ENCODE measurements at regions of chr1 and their contacts with region 1.

Region 1: GRCh38 chr1:181479137-181479745 is 4.1 kb upstream of the CACNA1E start:
- DNase-seq: peak; percentile 59
- ATAC-seq: peak; percentile 95
- H3K4me3 ChIP-seq: no peak overlapping the region
- H3K27ac ChIP-seq: no peak overlapping the region
- H3K4me1 ChIP-seq: no peaks in the 10 kb centered on the region
- H3K27me3 ChIP-seq: peaks cover 40% of the 10 kb centered on the region
- CTCF ChIP-seq: peak; percentile 81 to 89 (median 84)
- POLR2A ChIP-seq: no peak
- RAD21 ChIP-seq: peak; percentile 87

Region 2: DNA sequence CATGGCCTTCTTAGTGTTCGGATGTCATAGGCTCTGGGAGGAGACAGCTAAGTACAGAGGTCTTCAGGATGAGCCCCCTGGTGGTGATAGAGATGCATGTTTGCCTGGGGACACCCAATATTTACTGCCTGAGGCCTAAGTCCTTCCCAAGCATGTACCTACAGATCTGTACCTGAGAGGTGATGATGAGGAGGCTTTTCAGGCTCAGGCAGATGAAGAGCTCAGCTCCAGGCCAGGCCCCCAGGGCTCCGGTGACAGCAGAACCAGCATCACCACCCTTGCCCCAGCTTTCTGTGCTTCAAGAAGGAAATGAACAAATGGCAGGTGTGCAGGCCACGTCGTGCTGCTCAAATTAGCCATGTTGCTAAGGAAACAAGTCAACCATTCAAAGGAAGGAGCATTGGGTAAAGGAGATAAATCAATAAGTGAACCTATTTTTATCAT is 25.2 kb after region 1 on chr1:
- CTCF ChIA-PET with region 1: interaction called, 4 read pairs
- POLR2A ChIA-PET with region 1: no interaction called
- RAD21 ChIA-PET with region 1: no interaction called
- intact Hi-C with region 1: loop called (anchors 1 kb)
- DNase-seq: peak; percentile 62
- ATAC-seq: peak; percentile 98
- H3K4me3 ChIP-seq: no peak overlapping the region
- H3K27ac ChIP-seq: no peak overlapping the region
- H3K4me1 ChIP-seq: no peaks in the 10 kb centered on the region
- H3K27me3 ChIP-seq: peaks cover 10% of the 10 kb centered on the region
- CTCF ChIP-seq: peak in 2 of 3 experiments; percentile 64 to 66; a peak in 4 of 6 replicates
- POLR2A ChIP-seq: no peak
- RAD21 ChIP-seq: no peak; the same call in 1 of the 2 replicates

Region 3: GRCh38 chr1:181676269-181676668 is 197.0 kb after region 1 on chr1:
- CTCF ChIA-PET with region 1: interaction called, 9 read pairs
- POLR2A ChIA-PET with region 1: no interaction called
- RAD21 ChIA-PET with region 1: interaction called in 1 of 2 experiments, 3 read pairs
- intact Hi-C with region 1: loop called (anchors 1 kb)
- DNase-seq: peak; percentile 13
- ATAC-seq: peak; percentile 87
- H3K4me3 ChIP-seq: no peak overlapping the region
- H3K27ac ChIP-seq: no peak overlapping the region
- H3K4me1 ChIP-seq: no peaks in the 10 kb centered on the region
- H3K27me3 ChIP-seq: peaks cover 29% of the 10 kb centered on the region; the same call in 1 of the 2 replicates
- CTCF ChIP-seq: peak; percentile 20 to 54 (median 45); a peak in 4 of 6 replicates
- POLR2A ChIP-seq: no peak
- RAD21 ChIP-seq: peak; percentile 60

Region 4: DNA sequence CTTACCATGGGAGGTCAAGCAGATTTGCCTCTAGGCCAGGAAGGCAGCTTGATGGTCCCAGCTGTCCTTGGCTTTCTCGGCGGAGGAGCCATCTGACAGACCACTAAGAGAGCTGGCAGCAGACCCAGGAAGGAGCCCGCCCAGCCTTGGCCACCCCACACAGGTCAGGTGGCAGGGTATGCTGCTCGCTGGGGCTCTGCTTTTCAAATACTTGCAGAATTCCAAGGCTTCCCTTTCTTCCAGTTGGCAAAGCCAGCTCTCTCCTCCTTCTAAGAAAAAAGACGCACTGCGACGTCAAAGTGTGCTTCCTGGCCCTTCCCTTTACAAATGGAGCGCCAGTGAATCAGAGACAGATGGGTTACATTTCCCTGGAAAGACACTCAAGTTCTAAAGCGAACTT is 233.5 kb after region 1 on chr1:
- CTCF ChIA-PET with region 1: no interaction called
- POLR2A ChIA-PET with region 1: no interaction called
- RAD21 ChIA-PET with region 1: no interaction called
- intact Hi-C with region 1: no loop called
- DNase-seq: no peak
- ATAC-seq: no peak
- H3K4me3 ChIP-seq: no peak overlapping the region
- H3K27ac ChIP-seq: no peak overlapping the region
- H3K4me1 ChIP-seq: no peaks in the 10 kb centered on the region
- H3K27me3 ChIP-seq: peaks cover 57% of the 10 kb centered on the region
- CTCF ChIP-seq: no peak
- POLR2A ChIP-seq: no peak
- RAD21 ChIP-seq: no peak

Region 5: GRCh38 chr1:182054698-182055326 is 575.6 kb after region 1 on chr1:
- CTCF ChIA-PET with region 1: interaction called, 18 read pairs
- POLR2A ChIA-PET with region 1: no interaction called
- RAD21 ChIA-PET with region 1: interaction called in 1 of 2 experiments, 3 read pairs
- intact Hi-C with region 1: loop called (anchors 1 kb)
- DNase-seq: peak; percentile 26
- ATAC-seq: peak; percentile 84
- H3K4me3 ChIP-seq: no peak overlapping the region
- H3K27ac ChIP-seq: no peak overlapping the region
- H3K4me1 ChIP-seq: no peaks in the 10 kb centered on the region
- H3K27me3 ChIP-seq: no peaks in the 10 kb centered on the region
- CTCF ChIP-seq: peak; percentile 51 to 68 (median 60); a peak in 5 of 6 replicates
- POLR2A ChIP-seq: no peak
- RAD21 ChIP-seq: peak; percentile 70

Region 6: DNA sequence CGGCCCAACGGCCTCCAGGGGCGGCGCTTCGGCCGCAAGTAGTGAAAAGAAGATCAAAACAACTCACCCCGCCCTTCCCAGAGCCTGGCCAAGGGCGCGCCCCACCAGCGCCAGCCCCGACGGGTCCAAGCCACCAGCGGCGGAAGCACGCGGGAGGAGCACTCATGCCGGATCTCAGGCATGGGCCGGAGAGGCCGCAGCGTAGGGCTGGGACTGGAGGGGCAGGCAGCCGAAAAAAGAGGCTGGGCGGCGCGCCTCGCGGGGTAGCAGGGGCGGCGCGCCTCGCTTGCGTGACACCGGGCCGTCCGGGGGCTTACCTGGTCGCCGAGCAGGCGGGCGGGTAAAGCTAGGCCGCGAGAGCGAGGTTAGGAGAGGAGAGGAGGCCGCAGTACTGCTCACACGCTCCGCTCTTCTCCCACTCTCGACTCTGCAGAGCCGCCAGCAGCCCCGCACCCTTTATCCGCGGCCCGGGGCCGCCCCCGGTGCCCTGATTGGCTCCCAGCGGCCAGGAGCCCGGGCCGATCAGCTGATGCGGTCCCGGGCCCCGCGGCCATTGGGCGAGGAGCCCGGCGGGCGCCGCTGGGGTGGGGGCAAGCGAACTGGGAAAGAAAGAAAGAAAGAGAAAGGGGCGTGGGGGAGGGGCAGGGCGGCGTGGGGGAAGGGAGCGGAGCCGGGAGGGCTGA is 912.3 kb after region 1 on chr1 and contains the start of gene GLUL:
- CTCF ChIA-PET with region 1: no interaction called
- POLR2A ChIA-PET with region 1: no interaction called
- RAD21 ChIA-PET with region 1: no interaction called
- intact Hi-C with region 1: loop called (anchors 5 kb)
- DNase-seq: peak; percentile 68
- ATAC-seq: peak; percentile 93
- H3K4me3 ChIP-seq: peak within 1 kb of the TSS; percentile 71 to 85
- H3K27ac ChIP-seq: peak within 1 kb of the TSS; percentile 94
- H3K4me1 ChIP-seq: peaks cover 13 to 18% of the 10 kb centered on the region in 2 experiments
- H3K27me3 ChIP-seq: no peaks in the 10 kb centered on the region
- CTCF ChIP-seq: no peak
- POLR2A ChIP-seq: peak; percentile 97
- RAD21 ChIP-seq: no peak; the same call in 1 of the 2 replicates
- total RNA-seq, gene GLUL: 165 TPM